ENCODE measurements at regions of chr20 and their contacts with region 1.

Region 1: GRCh38 chr20:38779247-38780097 is 26.0 kb upstream of the PPP1R16B start:
- DNase-seq: peak in 1 of 2 experiments; percentile 70
- H3K4me3 ChIP-seq: peak overlapping the region in 2 of 4 experiments; percentile 33 to 46; a peak in 5 of 8 replicates
- H3K27ac ChIP-seq: peak overlapping the region; percentile 12; the same call in 1 of the 2 replicates
- H3K4me1 ChIP-seq: peaks cover 3 to 8% (median 7%) of the 10 kb centered on the region in 4 experiments; a peak in 5 of 7 replicates
- H3K27me3 ChIP-seq: no peaks in the 10 kb centered on the region
- CTCF ChIP-seq: no peak
- EP300 ChIP-seq: no peak
- POLR2A ChIP-seq: peak in 1 of 2 experiments; percentile 59; a peak in 2 of 3 replicates
- RAD21 ChIP-seq: no peak

Region 2: GRCh38 chr20:38764567-38765355 is 14.7 kb before region 1 on chr20:
- CTCF ChIA-PET with region 1: interaction called, 6 read pairs
- POLR2A ChIA-PET with region 1: interaction called, 13 read pairs
- DNase-seq: no peak
- H3K4me3 ChIP-seq: no peak overlapping the region
- H3K27ac ChIP-seq: no peak overlapping the region
- H3K4me1 ChIP-seq: 0 out of 7 replicates have a peak, but pooled peaks cover 0 to 2% (median 0%) of the 10 kb centered on the region in 4 experiments
- H3K27me3 ChIP-seq: no peaks in the 10 kb centered on the region
- CTCF ChIP-seq: no peak
- EP300 ChIP-seq: no peak
- POLR2A ChIP-seq: no peak
- RAD21 ChIP-seq: no peak

Region 3: GRCh38 chr20:38790200-38791053 is 11.0 kb after region 1 on chr20:
- CTCF ChIA-PET with region 1: interaction called, 5 read pairs
- POLR2A ChIA-PET with region 1: interaction called, 11 read pairs
- DNase-seq: no peak
- H3K4me3 ChIP-seq: no peak overlapping the region
- H3K27ac ChIP-seq: no peak overlapping the region
- H3K4me1 ChIP-seq: no peaks in the 10 kb centered on the region; a peak in 1 of 7 replicates
- H3K27me3 ChIP-seq: no peaks in the 10 kb centered on the region
- CTCF ChIP-seq: peak; percentile 36 to 72 (median 70)
- EP300 ChIP-seq: no peak
- POLR2A ChIP-seq: no peak
- RAD21 ChIP-seq: peak; percentile 75 to 80